SK-N-SH (cell line): ENCODE measurements at regions of chr12 and their contacts with region 1.

Region 1: DNA sequence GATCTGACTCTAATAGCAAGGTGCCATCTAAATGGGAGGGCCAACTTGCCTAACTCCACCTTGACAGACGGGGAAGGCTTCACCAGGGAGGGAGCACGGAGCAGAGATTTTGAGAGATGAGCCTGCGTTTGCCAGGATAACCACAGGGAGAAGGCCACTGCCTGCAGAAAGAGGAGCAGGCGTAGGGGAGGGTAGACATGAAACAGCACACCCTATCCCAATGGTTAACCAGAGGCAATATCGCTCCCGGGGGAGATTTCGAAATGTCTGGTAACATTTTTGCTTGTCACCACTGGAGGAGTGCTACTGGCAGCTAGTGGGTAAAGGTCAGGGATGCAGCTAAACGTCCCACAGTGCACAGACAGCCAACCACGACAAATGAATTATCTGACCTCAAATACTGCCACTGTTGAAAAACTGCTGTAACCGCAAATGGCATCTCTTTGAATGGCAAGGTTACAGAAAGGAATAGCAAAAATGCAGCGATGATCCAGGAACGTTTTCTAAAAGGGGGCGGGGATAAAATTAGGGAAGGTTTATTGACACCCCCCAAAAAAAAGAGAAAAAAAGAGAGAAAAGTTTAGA is 126.0 kb upstream of the ATF7IP start:
- DNase-seq: peak; percentile 45
- H3K4me3 ChIP-seq: no peak overlapping the region
- H3K27ac ChIP-seq: peak overlapping the region in 1 of 2 experiments; percentile 45; a peak in 1 of 4 replicates
- H3K4me1 ChIP-seq: peaks cover 6 to 10% of the 10 kb centered on the region in 2 experiments; a peak in 2 of 4 replicates
- H3K27me3 ChIP-seq: no peaks in the 10 kb centered on the region
- CTCF ChIP-seq: no peak
- EP300 ChIP-seq: no peak
- RAD21 ChIP-seq: no peak; the same call in 1 of the 2 replicates

Region 2: DNA sequence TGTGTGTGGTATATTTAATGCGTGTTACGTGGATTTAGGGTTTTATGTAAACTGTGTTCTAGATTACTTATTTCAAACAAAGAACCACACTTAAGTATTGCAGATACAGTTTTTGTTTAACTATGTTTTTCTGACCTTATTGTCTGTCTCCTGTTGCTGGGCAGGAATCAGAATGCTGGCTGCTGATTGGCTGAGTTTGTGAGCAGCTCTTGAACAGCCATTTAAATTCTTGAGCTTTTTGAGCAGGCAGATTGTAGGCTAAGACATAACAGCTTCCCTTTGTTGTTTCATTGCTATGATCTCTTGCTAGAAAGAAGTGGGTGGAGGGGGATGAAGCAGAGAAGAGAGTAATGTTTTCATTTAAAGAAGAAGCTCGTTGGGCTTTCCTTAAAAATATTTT is 178.3 kb after region 1 on chr12:
- CTCF ChIA-PET with region 1: interaction called, 10 read pairs
- POLR2A ChIA-PET with region 1: no interaction called
- DNase-seq: peak; percentile 46
- H3K4me3 ChIP-seq: no peak overlapping the region
- H3K27ac ChIP-seq: peak overlapping the region; percentile 20 to 92; a peak in 3 of 4 replicates
- H3K4me1 ChIP-seq: peaks cover 0 to 12% of the 10 kb centered on the region in 2 experiments; a peak in 2 of 4 replicates
- H3K27me3 ChIP-seq: no peaks in the 10 kb centered on the region
- CTCF ChIP-seq: no peak
- EP300 ChIP-seq: peak in 1 of 2 experiments; percentile 12; a peak in 1 of 4 replicates
- RAD21 ChIP-seq: no peak

Region 3: GRCh38 chr12:14613718-14614117 is 374.3 kb after region 1 on chr12:
- CTCF ChIA-PET with region 1: interaction called, 27 read pairs
- POLR2A ChIA-PET with region 1: no interaction called
- DNase-seq: no peak
- H3K4me3 ChIP-seq: no peak overlapping the region
- H3K27ac ChIP-seq: no peak overlapping the region
- H3K4me1 ChIP-seq: no peaks in the 10 kb centered on the region
- H3K27me3 ChIP-seq: no peaks in the 10 kb centered on the region
- CTCF ChIP-seq: no peak
- EP300 ChIP-seq: no peak
- RAD21 ChIP-seq: no peak

Region 4: GRCh38 chr12:14618983-14619382 is 379.5 kb after region 1 on chr12:
- CTCF ChIA-PET with region 1: interaction called, 27 read pairs
- POLR2A ChIA-PET with region 1: no interaction called
- DNase-seq: peak; percentile 5
- H3K4me3 ChIP-seq: no peak overlapping the region
- H3K27ac ChIP-seq: no peak overlapping the region
- H3K4me1 ChIP-seq: no peaks in the 10 kb centered on the region
- H3K27me3 ChIP-seq: no peaks in the 10 kb centered on the region
- CTCF ChIP-seq: peak; percentile 51
- EP300 ChIP-seq: no peak
- RAD21 ChIP-seq: peak; percentile 52

Region 5: GRCh38 chr12:14664510-14664909 is 425.1 kb after region 1 on chr12:
- CTCF ChIA-PET with region 1: interaction called, 14 read pairs
- POLR2A ChIA-PET with region 1: no interaction called
- DNase-seq: peak; percentile 15
- H3K4me3 ChIP-seq: no peak overlapping the region
- H3K27ac ChIP-seq: no peak overlapping the region
- H3K4me1 ChIP-seq: no peaks in the 10 kb centered on the region
- H3K27me3 ChIP-seq: no peaks in the 10 kb centered on the region; the same call in 1 of the 2 replicates
- CTCF ChIP-seq: peak; percentile 66
- EP300 ChIP-seq: no peak
- RAD21 ChIP-seq: peak; percentile 70